PC-3 (cell line): ENCODE measurements at regions of chr15 and their contacts with region 1.

Region 1: DNA sequence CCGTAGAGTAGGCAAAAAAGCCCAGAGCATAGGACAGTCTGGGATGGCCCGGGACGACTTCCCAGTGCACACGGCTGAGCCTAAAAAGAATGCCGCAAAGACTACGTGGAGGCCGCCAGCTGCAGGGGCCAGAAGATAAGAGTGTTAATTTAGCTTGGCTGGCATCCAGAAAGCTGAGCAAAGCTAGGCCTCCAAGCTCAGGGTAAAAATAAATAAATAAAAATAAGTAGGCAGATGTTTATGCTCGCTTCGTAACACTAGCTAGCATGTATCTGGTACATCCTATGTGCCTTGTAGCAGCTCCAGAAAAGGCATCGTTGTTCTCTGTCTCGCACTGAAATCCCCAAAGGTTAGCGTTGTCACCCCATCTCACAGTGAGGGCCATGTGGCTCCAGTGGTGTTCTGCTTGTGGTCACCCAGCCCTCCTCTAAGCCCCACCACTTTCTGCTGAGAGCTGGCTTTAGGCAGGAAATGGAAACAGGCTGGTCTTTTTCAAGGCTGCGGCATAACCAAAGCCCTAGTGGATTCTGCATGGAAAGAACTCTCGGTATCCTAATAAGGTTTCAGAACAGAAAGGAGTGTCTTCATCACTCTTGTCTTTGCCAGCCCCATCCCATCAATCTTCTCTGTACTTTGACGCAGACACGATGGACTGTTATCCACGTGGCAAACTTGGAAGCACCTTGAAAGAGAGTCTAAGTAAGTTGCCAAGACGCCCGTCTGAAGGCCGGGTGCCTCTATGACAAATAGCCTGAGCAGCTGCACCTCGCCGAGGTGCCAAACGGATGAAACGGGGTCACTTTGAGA is 58.1 kb upstream of the MEF2A start:
- DNase-seq: no peak
- ATAC-seq: no peak
- H3K4me3 ChIP-seq: peak overlapping the region; percentile 21; the same call in 1 of the 2 replicates
- H3K27ac ChIP-seq: peak overlapping the region; percentile 73
- H3K4me1 ChIP-seq: peaks cover 32% of the 10 kb centered on the region
- H3K27me3 ChIP-seq: no peaks in the 10 kb centered on the region
- CTCF ChIP-seq: no peak

Region 2: DNA sequence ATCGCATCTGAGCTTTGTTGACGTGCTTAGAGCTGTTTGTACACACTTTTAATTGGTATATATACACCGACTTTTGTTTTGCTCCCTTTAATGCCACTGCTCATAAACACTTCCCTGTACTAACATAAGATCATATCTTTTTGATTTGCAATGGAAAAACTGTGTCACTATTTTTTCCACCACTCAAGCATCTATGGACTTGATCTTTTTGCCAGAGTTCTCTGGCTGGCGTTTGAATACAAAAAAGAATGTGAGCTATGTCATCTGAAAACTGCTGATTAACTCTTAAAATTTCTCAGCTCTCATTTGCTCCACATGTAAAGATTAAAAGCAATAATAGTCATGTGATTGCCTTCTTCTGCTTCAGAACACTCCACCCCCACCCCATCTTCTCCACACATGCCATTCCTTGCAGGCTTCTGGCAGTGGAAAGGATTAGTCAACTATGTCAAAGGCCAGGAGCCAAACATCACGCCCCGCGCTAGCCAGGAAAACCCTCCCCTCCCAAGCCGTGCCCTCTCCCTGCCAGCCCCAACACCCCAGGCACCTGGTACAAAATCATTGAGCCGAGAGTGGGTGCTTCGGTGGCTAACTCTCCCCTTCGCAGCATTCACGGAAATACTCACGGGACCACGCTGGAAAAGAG is 65.3 kb before region 1 on chr15:
- CTCF ChIA-PET with region 1: no interaction called
- POLR2A ChIA-PET with region 1: no interaction called
- intact Hi-C with region 1: loop called (anchors 2 kb)
- DNase-seq: peak; percentile 77
- ATAC-seq: peak; percentile 91
- H3K4me3 ChIP-seq: no peak overlapping the region
- H3K27ac ChIP-seq: peak overlapping the region; percentile 9
- H3K4me1 ChIP-seq: peaks cover 17% of the 10 kb centered on the region
- H3K27me3 ChIP-seq: no peaks in the 10 kb centered on the region
- CTCF ChIP-seq: no peak